Psoas muscle (tissue), 8 donors: ENCODE measurements at regions of chr12 and their contacts with region 1.

Region 1: GRCh38 chr12:104358347-104359003 is 54.9 kb downstream of the EID3 start:
- DNase-seq: peak; percentile 32 to 67
- ATAC-seq: peak; percentile 56 to 84 (median 76)
- H3K4me3 ChIP-seq: no peak overlapping the region
- H3K27ac ChIP-seq: no peak overlapping the region
- H3K4me1 ChIP-seq: no peaks in the 10 kb centered on the region
- H3K27me3 ChIP-seq: no peaks in the 10 kb centered on the region
- CTCF ChIP-seq: peak; percentile 78

Region 2: DNA sequence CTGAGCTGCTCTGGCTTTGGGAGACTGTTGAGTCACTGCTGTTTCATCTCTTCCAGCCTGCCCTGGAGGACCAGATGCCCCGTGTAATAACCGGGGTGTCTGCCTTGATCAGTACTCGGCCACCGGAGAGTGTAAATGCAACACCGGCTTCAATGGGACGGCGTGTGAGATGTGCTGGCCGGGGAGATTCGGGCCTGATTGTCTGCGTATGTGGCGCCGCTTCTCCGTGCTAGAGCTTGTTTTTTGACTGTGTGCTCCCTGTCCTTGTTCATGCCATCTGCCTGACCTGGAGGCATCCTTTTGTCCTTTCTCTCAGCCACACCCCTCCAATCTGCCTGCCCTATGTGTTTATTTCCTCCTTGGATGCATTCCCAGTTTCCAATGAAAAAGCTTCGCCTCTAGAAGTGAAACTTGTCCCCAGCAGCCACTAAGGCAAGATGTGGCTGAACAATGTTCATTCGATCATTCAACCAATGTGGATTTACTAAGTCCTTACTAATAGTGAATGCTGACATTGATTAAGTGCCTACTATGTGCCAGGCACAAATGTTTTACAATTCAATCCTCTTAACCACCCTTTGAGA is 616.0 kb before region 1 on chr12:
- intact Hi-C with region 1: no loop called
- DNase-seq: no peak
- ATAC-seq: no peak
- H3K4me3 ChIP-seq: no peak overlapping the region
- H3K27ac ChIP-seq: no peak overlapping the region
- H3K4me1 ChIP-seq: no peaks in the 10 kb centered on the region
- H3K27me3 ChIP-seq: no peaks in the 10 kb centered on the region
- CTCF ChIP-seq: no peak

Region 3: DNA sequence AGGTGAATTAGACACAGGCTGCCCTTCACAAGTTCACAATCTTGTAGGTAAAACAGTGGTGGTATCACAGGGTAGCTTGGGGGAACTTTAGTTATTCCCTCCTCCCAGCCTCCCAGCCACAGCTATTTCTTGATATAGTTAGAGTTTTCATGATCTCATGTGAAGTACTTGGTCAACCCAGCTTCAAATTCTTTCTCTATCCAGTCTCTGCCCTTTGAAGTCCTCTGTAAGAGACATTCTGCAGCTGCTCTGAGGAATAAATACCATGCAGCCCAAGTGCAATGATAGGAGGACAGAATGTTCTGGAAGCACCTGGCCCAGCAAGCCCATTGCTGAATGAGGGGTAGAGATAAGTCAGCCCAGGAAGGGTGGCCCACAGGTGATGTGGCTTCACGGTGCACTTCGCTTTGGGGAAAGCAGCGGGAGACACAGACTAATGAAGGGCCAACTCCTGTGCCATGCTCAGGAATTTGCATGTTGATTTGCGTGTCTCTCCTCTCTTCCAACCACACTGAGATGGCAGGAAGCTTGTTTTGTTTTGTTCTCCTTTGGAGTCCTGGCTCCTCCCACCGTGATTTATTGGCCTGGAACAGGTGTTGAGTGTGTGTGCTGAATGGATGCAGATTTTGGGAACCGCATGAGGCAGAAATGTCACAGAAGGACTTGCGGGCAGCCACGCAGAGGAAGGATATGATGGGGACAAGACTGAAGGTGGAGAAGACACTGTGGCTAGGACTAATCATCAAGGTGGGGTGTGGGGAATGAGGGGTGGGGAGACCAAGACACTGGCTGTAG is 150.9 kb before region 1 on chr12:
- intact Hi-C with region 1: loop called (anchors 5 kb)
- DNase-seq: no peak
- ATAC-seq: no peak
- H3K4me3 ChIP-seq: no peak overlapping the region
- H3K27ac ChIP-seq: no peak overlapping the region
- H3K4me1 ChIP-seq: no peaks in the 10 kb centered on the region
- H3K27me3 ChIP-seq: no peaks in the 10 kb centered on the region
- CTCF ChIP-seq: no peak